ENCODE measurements at regions of chr15 and their contacts with region 1.

Region 1: GRCh38 chr15:36501063-36501678 is 78.3 kb upstream of the CDIN1 start:
- DNase-seq: peak; percentile 74
- ATAC-seq: peak; percentile 98
- H3K4me3 ChIP-seq: no peak overlapping the region
- H3K27ac ChIP-seq: no peak overlapping the region
- H3K4me1 ChIP-seq: peaks cover 20% of the 10 kb centered on the region
- H3K27me3 ChIP-seq: peaks cover 0 to 41% of the 10 kb centered on the region in 2 experiments; a peak in 3 of 5 replicates
- CTCF ChIP-seq: peak; percentile 85
- EP300 ChIP-seq: no peak
- POLR2A ChIP-seq: no peak
- RAD21 ChIP-seq: peak; percentile 67; the same call in 1 of the 2 replicates

Region 2: DNA sequence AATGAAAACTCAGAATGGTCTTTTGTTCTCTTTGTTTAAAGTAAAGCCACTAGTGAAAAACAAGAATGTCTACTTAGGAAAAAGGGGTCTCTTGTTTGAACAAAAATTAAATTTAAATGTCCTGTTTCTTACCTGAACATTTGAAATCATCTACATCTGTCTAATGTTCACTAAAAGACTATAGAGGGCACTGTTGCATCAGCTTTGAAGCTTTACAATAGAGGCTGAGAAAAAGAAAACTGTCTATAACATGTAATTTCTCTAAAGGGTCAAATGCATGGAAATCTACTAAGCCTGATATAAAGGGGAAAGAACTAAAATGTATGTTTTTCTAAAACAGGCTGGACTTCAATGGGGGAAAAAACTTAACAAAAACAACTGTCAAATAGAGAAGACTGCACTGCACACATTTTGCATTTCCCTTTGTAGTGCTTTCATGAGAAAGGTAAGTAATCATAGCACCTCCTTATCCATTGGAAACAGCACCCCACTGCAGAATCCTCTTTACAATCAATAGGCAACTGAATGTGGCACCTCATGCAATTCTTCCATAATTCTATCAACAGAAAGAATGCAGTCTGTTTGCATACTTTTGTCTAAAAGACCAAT is 981.5 kb before region 1 on chr15:
- CTCF ChIA-PET with region 1: no interaction called
- POLR2A ChIA-PET with region 1: no interaction called
- in situ Hi-C with region 1: no loop called
- intact Hi-C with region 1: loop called (anchors 5 kb)
- DNase-seq: peak; percentile 45
- ATAC-seq: peak; percentile 61
- H3K4me3 ChIP-seq: no peak overlapping the region
- H3K27ac ChIP-seq: no peak overlapping the region
- H3K4me1 ChIP-seq: peaks cover 8% of the 10 kb centered on the region
- H3K27me3 ChIP-seq: no peaks in the 10 kb centered on the region
- CTCF ChIP-seq: peak; percentile 60
- EP300 ChIP-seq: no peak
- POLR2A ChIP-seq: no peak
- RAD21 ChIP-seq: peak; percentile 69; the same call in 1 of the 2 replicates

Region 3: GRCh38 chr15:35986191-35986721 is 514.9 kb before region 1 on chr15:
- CTCF ChIA-PET with region 1: no interaction called
- POLR2A ChIA-PET with region 1: no interaction called
- in situ Hi-C with region 1: no loop called
- intact Hi-C with region 1: no loop called
- DNase-seq: no peak
- ATAC-seq: no peak
- H3K4me3 ChIP-seq: no peak overlapping the region
- H3K27ac ChIP-seq: no peak overlapping the region
- H3K4me1 ChIP-seq: no peaks in the 10 kb centered on the region
- H3K27me3 ChIP-seq: no peaks in the 10 kb centered on the region
- CTCF ChIP-seq: no peak
- EP300 ChIP-seq: no peak
- POLR2A ChIP-seq: no peak
- RAD21 ChIP-seq: no peak

Region 4: DNA sequence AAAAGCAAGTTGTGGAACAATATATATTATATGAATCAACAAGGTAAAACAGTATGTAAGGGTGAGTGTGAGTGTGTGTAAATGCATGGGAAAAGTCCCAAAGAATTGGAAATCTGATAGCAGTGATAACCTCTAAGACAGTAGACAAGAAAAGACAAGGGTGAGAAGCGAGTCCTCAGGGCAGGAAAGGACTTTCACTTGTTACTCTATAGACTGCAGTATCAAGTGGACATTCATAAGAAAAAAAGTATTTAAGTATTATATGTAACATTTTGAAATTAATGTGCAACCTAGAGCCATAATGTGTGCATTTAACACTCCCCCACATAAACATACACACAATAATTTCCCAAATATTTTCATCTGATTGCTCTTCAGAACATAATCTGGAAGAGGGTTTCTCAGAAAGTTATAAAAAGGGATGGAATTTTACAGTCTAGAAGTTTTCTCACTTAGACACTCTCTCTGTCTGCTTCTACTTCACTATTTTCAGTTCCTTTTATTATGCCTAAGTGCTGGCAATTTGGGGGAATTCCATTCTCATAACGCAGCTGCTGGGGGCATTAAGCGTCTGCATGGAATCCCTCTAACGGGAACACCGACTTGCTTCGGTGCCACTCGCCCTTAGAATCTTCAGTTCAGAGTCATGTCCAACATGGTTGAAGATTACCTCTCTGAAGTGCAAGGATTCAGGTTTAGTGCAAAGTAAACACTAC is 28.3 kb after region 1 on chr15:
- CTCF ChIA-PET with region 1: no interaction called
- POLR2A ChIA-PET with region 1: no interaction called
- in situ Hi-C with region 1: no loop called
- intact Hi-C with region 1: no loop called
- DNase-seq: no peak
- ATAC-seq: no peak
- H3K4me3 ChIP-seq: no peak overlapping the region
- H3K27ac ChIP-seq: no peak overlapping the region
- H3K4me1 ChIP-seq: no peaks in the 10 kb centered on the region
- H3K27me3 ChIP-seq: peaks cover 0 to 21% of the 10 kb centered on the region in 2 experiments; a peak in 2 of 5 replicates
- CTCF ChIP-seq: no peak
- EP300 ChIP-seq: no peak
- POLR2A ChIP-seq: no peak
- RAD21 ChIP-seq: no peak

Region 5: GRCh38 chr15:36798366-36798765 is 297.2 kb after region 1 on chr15:
- CTCF ChIA-PET with region 1: no interaction called
- POLR2A ChIA-PET with region 1: no interaction called
- in situ Hi-C with region 1: no loop called
- intact Hi-C with region 1: no loop called
- DNase-seq: no peak
- ATAC-seq: no peak
- H3K4me3 ChIP-seq: no peak overlapping the region
- H3K27ac ChIP-seq: no peak overlapping the region
- H3K4me1 ChIP-seq: no peaks in the 10 kb centered on the region
- H3K27me3 ChIP-seq: no peaks in the 10 kb centered on the region
- CTCF ChIP-seq: no peak
- EP300 ChIP-seq: no peak
- POLR2A ChIP-seq: no peak
- RAD21 ChIP-seq: no peak

Region 6: GRCh38 chr15:36883713-36884517 is 382.7 kb after region 1 on chr15:
- CTCF ChIA-PET with region 1: no interaction called
- POLR2A ChIA-PET with region 1: no interaction called
- in situ Hi-C with region 1: no loop called
- intact Hi-C with region 1: loop called (anchors 2 kb)
- DNase-seq: peak; percentile 69
- ATAC-seq: peak; percentile 93
- H3K4me3 ChIP-seq: no peak overlapping the region
- H3K27ac ChIP-seq: no peak overlapping the region
- H3K4me1 ChIP-seq: peaks cover 23% of the 10 kb centered on the region
- H3K27me3 ChIP-seq: peaks cover 5 to 72% of the 10 kb centered on the region in 2 experiments
- CTCF ChIP-seq: peak; percentile 90
- EP300 ChIP-seq: no peak
- POLR2A ChIP-seq: no peak
- RAD21 ChIP-seq: peak; percentile 87

Region 7: GRCh38 chr15:37106490-37107001 is 605.4 kb after region 1 on chr15:
- CTCF ChIA-PET with region 1: no interaction called
- POLR2A ChIA-PET with region 1: no interaction called
- in situ Hi-C with region 1: loop called (anchors 10 kb)
- intact Hi-C with region 1: loop called (anchors 2 kb)
- DNase-seq: no peak
- ATAC-seq: no peak
- H3K4me3 ChIP-seq: no peak overlapping the region
- H3K27ac ChIP-seq: no peak overlapping the region
- H3K4me1 ChIP-seq: peaks cover 30% of the 10 kb centered on the region
- H3K27me3 ChIP-seq: peaks cover 0 to 21% of the 10 kb centered on the region in 2 experiments; a peak in 2 of 5 replicates
- CTCF ChIP-seq: peak; percentile 56
- EP300 ChIP-seq: no peak
- POLR2A ChIP-seq: no peak
- RAD21 ChIP-seq: peak; percentile 45; the same call in 1 of the 2 replicates

Region 8: DNA sequence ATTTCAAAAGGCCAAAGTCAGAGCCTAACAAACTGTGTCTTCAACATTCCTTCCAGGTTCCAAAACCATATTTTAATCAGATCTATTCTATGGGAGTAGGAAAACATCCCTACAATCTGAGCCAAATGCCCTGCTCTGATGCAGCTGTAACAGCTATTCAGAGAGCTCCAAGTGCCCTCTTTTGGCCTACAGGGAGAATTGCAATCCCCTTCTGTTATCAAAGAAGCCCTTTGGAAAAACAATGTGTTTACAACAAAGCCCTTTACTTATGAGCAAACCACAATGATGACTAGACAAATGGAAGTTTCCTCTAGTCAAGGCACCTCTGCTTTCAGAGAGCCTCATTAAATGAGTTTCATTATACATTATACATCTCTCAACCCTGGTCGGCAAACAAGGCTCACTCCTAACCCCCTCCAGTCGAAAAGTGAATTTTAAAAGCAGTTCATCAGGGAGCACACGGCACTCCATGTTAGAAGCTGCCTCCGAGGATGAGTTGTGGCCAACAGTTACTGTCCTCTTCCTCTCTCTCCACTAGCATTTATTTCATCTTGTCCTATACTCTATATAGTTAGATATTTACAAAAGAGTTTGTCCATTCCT is 1390.7 kb after region 1 on chr15:
- CTCF ChIA-PET with region 1: no interaction called
- POLR2A ChIA-PET with region 1: no interaction called
- in situ Hi-C with region 1: loop called (anchors 25 kb)
- intact Hi-C with region 1: no loop called
- DNase-seq: peak; percentile 23
- ATAC-seq: peak; percentile 76
- H3K4me3 ChIP-seq: no peak overlapping the region
- H3K27ac ChIP-seq: no peak overlapping the region
- H3K4me1 ChIP-seq: no peaks in the 10 kb centered on the region
- H3K27me3 ChIP-seq: peaks cover 0 to 3% of the 10 kb centered on the region in 2 experiments; a peak in 1 of 5 replicates
- CTCF ChIP-seq: peak; percentile 66
- EP300 ChIP-seq: no peak
- POLR2A ChIP-seq: no peak
- RAD21 ChIP-seq: 0 out of 2 replicates have a peak, but pooled peaks have one; percentile 14